ENCODE measurements at regions of chr9 and their contacts with region 1.

Region 1: GRCh38 chr9:27194401-27195091 is 85.5 kb downstream of the TEK start:
- DNase-seq: no peak
- ATAC-seq: peak in 1 of 8 donors; percentile 42
- H3K4me3 ChIP-seq: no peak overlapping the region
- H3K27ac ChIP-seq: peak overlapping the region in 4 of 10 donors; percentile 23 to 66 (median 56)
- H3K4me1 ChIP-seq: peaks cover 0 to 56% (median 28%) of the 10 kb centered on the region in 9 donors
- H3K27me3 ChIP-seq: no peaks in the 10 kb centered on the region
- CTCF ChIP-seq: no peak

Region 2: DNA sequence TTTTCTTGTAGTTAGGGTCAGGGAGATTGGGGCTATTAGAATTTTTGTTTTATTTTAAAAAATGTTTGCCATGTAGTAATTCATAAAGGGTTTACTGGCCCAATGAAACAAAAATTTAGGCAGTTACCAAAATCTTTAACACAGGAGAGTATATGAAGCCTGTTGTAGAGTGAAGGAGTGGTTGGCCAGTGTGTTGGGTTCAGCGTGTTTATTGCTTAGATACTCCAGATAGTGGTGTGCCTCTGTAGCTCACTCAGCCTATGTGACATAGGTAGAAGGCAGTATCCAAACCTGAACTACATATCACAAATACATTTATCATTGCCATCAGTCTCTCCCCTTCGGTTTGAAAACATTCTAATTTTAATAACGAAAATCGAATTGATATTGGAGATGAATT is 84.4 kb before region 1 on chr9:
- intact Hi-C with region 1: loop called in 4 of 10 experiments (anchors 5 kb)
- DNase-seq: no peak
- ATAC-seq: peak in 1 of 8 donors; percentile 39
- H3K4me3 ChIP-seq: peak overlapping the region; percentile 18 to 63 (median 51)
- H3K27ac ChIP-seq: peak overlapping the region in 9 of 10 donors; percentile 9 to 92 (median 78)
- H3K4me1 ChIP-seq: peaks cover 0 to 20% (median 0%) of the 10 kb centered on the region in 9 donors
- H3K27me3 ChIP-seq: no peaks in the 10 kb centered on the region
- CTCF ChIP-seq: no peak

Region 3: GRCh38 chr9:27154908-27155307 is 39.6 kb before region 1 on chr9:
- intact Hi-C with region 1: loop called in 1 of 10 experiments (anchors 5 kb)
- DNase-seq: no peak
- ATAC-seq: peak in 2 of 8 donors; percentile 13 to 62
- H3K4me3 ChIP-seq: no peak overlapping the region
- H3K27ac ChIP-seq: peak overlapping the region in 1 of 10 donors; percentile 12
- H3K4me1 ChIP-seq: peaks cover 0 to 55% (median 35%) of the 10 kb centered on the region in 9 donors
- H3K27me3 ChIP-seq: no peaks in the 10 kb centered on the region
- CTCF ChIP-seq: no peak